Heart left ventricle (tissue), 16 donors: ENCODE measurements at regions of chr6 and their contacts with region 1.

Region 1: GRCh38 chr6:21935561-21936028 is 342.0 kb downstream of the SOX4 start:
- DNase-seq: peak in 1 of 5 donors; percentile 22
- ATAC-seq: no peak
- H3K4me3 ChIP-seq: no peak overlapping the region
- H3K27ac ChIP-seq: no peak overlapping the region
- H3K4me1 ChIP-seq: no peaks in the 10 kb centered on the region
- H3K27me3 ChIP-seq: no peaks in the 10 kb centered on the region
- CTCF ChIP-seq: peak; percentile 1 to 71 (median 52)
- POLR2A ChIP-seq: no peak

Region 2: GRCh38 chr6:20564269-20564668 is 1371.3 kb before region 1 on chr6:
- intact Hi-C with region 1: loop called in 1 of 10 experiments (anchors 5 kb)
- DNase-seq: no peak
- ATAC-seq: no peak
- H3K4me3 ChIP-seq: no peak overlapping the region
- H3K27ac ChIP-seq: no peak overlapping the region
- H3K4me1 ChIP-seq: peaks cover 0 to 8% (median 0%) of the 10 kb centered on the region in 12 donors
- H3K27me3 ChIP-seq: no peaks in the 10 kb centered on the region
- CTCF ChIP-seq: peak; percentile 59 to 78 (median 67)
- POLR2A ChIP-seq: no peak